Panc1 (cell line): ENCODE measurements at regions of chr12 and their contacts with region 1.

Region 1: DNA sequence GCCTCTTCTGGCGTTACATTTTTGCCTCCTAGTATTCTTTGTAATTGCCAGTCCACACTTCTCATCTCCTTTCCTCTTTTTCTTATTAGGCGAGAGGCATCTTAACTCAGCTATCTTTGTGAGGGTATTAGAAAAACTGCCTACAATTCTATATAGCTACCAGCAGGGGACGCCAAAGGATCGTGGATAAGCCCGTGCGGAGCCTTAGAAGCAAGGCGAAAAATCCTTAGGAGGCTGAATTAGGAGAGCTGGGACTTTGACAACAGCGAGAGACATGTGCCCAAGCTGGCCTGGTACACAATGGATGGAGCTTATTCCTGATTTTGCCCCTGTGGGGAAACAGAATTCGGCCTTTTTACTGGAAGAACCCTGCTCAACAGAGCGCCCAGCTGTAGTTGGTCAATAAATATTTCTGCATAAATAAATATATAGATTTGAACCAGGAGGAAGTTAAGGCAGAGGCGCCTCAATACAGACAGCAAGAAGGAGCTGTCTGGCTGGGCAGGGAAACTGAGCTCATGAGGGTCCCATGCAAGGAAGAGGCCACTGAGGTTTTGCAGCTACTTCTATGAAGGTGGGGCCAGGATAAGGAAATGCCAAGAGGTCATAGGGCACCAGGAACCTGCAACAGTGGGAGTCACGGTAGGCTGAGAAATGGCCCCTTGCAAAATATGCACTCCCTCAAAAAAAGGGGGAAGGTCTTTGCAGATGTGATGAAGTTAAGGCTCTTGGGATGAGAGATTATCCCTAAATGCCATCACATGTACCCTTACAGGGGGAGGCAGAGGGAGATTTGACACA is 14.6 kb upstream of the RBM19 start:
- DNase-seq: peak; percentile 45
- ATAC-seq: peak; percentile 90
- H3K4me3 ChIP-seq: no peak overlapping the region
- H3K27ac ChIP-seq: no peak overlapping the region
- H3K4me1 ChIP-seq: no peaks in the 10 kb centered on the region
- H3K27me3 ChIP-seq: peaks cover 3% of the 10 kb centered on the region; the same call in 1 of the 2 replicates
- CTCF ChIP-seq: peak; percentile 98

Region 2: GRCh38 chr12:113889076-113889475 is 91.7 kb before region 1 on chr12:
- CTCF ChIA-PET with region 1: no interaction called
- POLR2A ChIA-PET with region 1: no interaction called
- in situ Hi-C with region 1: no loop called
- intact Hi-C with region 1: no loop called
- DNase-seq: no peak
- ATAC-seq: no peak
- H3K4me3 ChIP-seq: no peak overlapping the region
- H3K27ac ChIP-seq: no peak overlapping the region
- H3K4me1 ChIP-seq: no peaks in the 10 kb centered on the region
- H3K27me3 ChIP-seq: no peaks in the 10 kb centered on the region
- CTCF ChIP-seq: no peak

Region 3: GRCh38 chr12:114476159-114476558 is 495.4 kb after region 1 on chr12:
- CTCF ChIA-PET with region 1: interaction called, 6 read pairs
- POLR2A ChIA-PET with region 1: no interaction called
- in situ Hi-C with region 1: no loop called
- intact Hi-C with region 1: loop called (anchors 2 kb)
- DNase-seq: no peak
- ATAC-seq: peak; percentile 72
- H3K4me3 ChIP-seq: no peak overlapping the region
- H3K27ac ChIP-seq: no peak overlapping the region
- H3K4me1 ChIP-seq: peaks cover 7% of the 10 kb centered on the region
- H3K27me3 ChIP-seq: peaks cover 45% of the 10 kb centered on the region
- CTCF ChIP-seq: peak; percentile 56

Region 4: GRCh38 chr12:114508529-114509129 is 527.9 kb after region 1 on chr12:
- CTCF ChIA-PET with region 1: interaction called, 20 read pairs
- POLR2A ChIA-PET with region 1: no interaction called
- in situ Hi-C with region 1: no loop called
- intact Hi-C with region 1: loop called (anchors 1 kb)
- DNase-seq: peak; percentile 38
- ATAC-seq: peak; percentile 87
- H3K4me3 ChIP-seq: no peak overlapping the region
- H3K27ac ChIP-seq: no peak overlapping the region
- H3K4me1 ChIP-seq: no peaks in the 10 kb centered on the region
- H3K27me3 ChIP-seq: peaks cover 32% of the 10 kb centered on the region
- CTCF ChIP-seq: peak; percentile 87

Region 5: GRCh38 chr12:114636723-114637483 is 656.2 kb after region 1 on chr12:
- CTCF ChIA-PET with region 1: interaction called, 5 read pairs
- POLR2A ChIA-PET with region 1: no interaction called
- in situ Hi-C with region 1: no loop called
- intact Hi-C with region 1: loop called (anchors 5 kb)
- DNase-seq: no peak
- ATAC-seq: peak; percentile 76
- H3K4me3 ChIP-seq: no peak overlapping the region
- H3K27ac ChIP-seq: no peak overlapping the region
- H3K4me1 ChIP-seq: no peaks in the 10 kb centered on the region
- H3K27me3 ChIP-seq: no peaks in the 10 kb centered on the region; the same call in 1 of the 2 replicates
- CTCF ChIP-seq: peak; percentile 75